IMR-90 (cell line): ENCODE measurements at regions of chr3 and their contacts with region 1.

Region 1: GRCh38 chr3:158109804-158110657 is at the start of gene RSRC1:
- DNase-seq: peak; percentile 89
- ATAC-seq: peak; percentile 78
- H3K4me3 ChIP-seq: peak within 1 kb of the TSS; percentile 85
- H3K27ac ChIP-seq: peak within 1 kb of the TSS; percentile 78
- H3K4me1 ChIP-seq: peaks cover 2% of the 10 kb centered on the region; the same call in 1 of the 2 replicates
- H3K27me3 ChIP-seq: peaks cover 33% of the 10 kb centered on the region
- CTCF ChIP-seq: no peak
- POLR2A ChIP-seq: peak; percentile 50; the same call in 1 of the 2 replicates
- RAD21 ChIP-seq: peak; percentile 13; the same call in 1 of the 2 replicates
- total RNA-seq, gene RSRC1: 41.8 and 71.7 TPM in 2 replicates

Region 2: GRCh38 chr3:158026236-158026635 is 83.8 kb before region 1 on chr3:
- CTCF ChIA-PET with region 1: no interaction called
- POLR2A ChIA-PET with region 1: no interaction called
- dilution Hi-C with region 1: no loop called
- in situ Hi-C with region 1: no loop called
- intact Hi-C with region 1: no loop called
- DNase-seq: no peak
- ATAC-seq: no peak
- H3K4me3 ChIP-seq: no peak overlapping the region
- H3K27ac ChIP-seq: no peak overlapping the region
- H3K4me1 ChIP-seq: no peaks in the 10 kb centered on the region
- H3K27me3 ChIP-seq: no peaks in the 10 kb centered on the region
- CTCF ChIP-seq: no peak
- POLR2A ChIP-seq: no peak
- RAD21 ChIP-seq: no peak

Region 3: GRCh38 chr3:158121295-158121694 is 11.3 kb after region 1 on chr3:
- CTCF ChIA-PET with region 1: no interaction called
- POLR2A ChIA-PET with region 1: interaction called, 10 read pairs
- dilution Hi-C with region 1: no loop called
- in situ Hi-C with region 1: no loop called
- intact Hi-C with region 1: no loop called
- DNase-seq: no peak
- ATAC-seq: no peak
- H3K4me3 ChIP-seq: no peak overlapping the region
- H3K27ac ChIP-seq: no peak overlapping the region
- H3K4me1 ChIP-seq: no peaks in the 10 kb centered on the region
- H3K27me3 ChIP-seq: no peaks in the 10 kb centered on the region
- CTCF ChIP-seq: no peak
- POLR2A ChIP-seq: no peak
- RAD21 ChIP-seq: no peak

Region 4: GRCh38 chr3:158160966-158161365 is 50.9 kb after region 1 on chr3:
- CTCF ChIA-PET with region 1: no interaction called
- POLR2A ChIA-PET with region 1: no interaction called
- dilution Hi-C with region 1: no loop called
- in situ Hi-C with region 1: no loop called
- intact Hi-C with region 1: loop called (anchors 5 kb)
- DNase-seq: peak; percentile 86
- ATAC-seq: peak; percentile 95
- H3K4me3 ChIP-seq: no peak overlapping the region
- H3K27ac ChIP-seq: no peak overlapping the region
- H3K4me1 ChIP-seq: no peaks in the 10 kb centered on the region; the same call in 1 of the 2 replicates
- H3K27me3 ChIP-seq: no peaks in the 10 kb centered on the region
- CTCF ChIP-seq: no peak
- POLR2A ChIP-seq: no peak
- RAD21 ChIP-seq: no peak

Region 5: GRCh38 chr3:158313338-158313927 is 203.4 kb after region 1 on chr3:
- CTCF ChIA-PET with region 1: interaction called, 3 read pairs
- POLR2A ChIA-PET with region 1: no interaction called
- dilution Hi-C with region 1: no loop called
- in situ Hi-C with region 1: no loop called
- intact Hi-C with region 1: loop called (anchors 5 kb)
- DNase-seq: peak; percentile 7
- ATAC-seq: peak; percentile 49; the same call in 1 of the 2 replicates
- H3K4me3 ChIP-seq: no peak overlapping the region
- H3K27ac ChIP-seq: no peak overlapping the region
- H3K4me1 ChIP-seq: no peaks in the 10 kb centered on the region
- H3K27me3 ChIP-seq: no peaks in the 10 kb centered on the region
- CTCF ChIP-seq: peak; percentile 38
- POLR2A ChIP-seq: no peak
- RAD21 ChIP-seq: peak; percentile 55

Region 6: GRCh38 chr3:158532099-158532734 is 422.2 kb after region 1 on chr3:
- CTCF ChIA-PET with region 1: no interaction called
- POLR2A ChIA-PET with region 1: no interaction called
- dilution Hi-C with region 1: no loop called
- in situ Hi-C with region 1: no loop called
- intact Hi-C with region 1: loop called (anchors 5 kb)
- DNase-seq: peak; percentile 70
- ATAC-seq: peak; percentile 54
- H3K4me3 ChIP-seq: no peak overlapping the region
- H3K27ac ChIP-seq: no peak overlapping the region
- H3K4me1 ChIP-seq: no peaks in the 10 kb centered on the region
- H3K27me3 ChIP-seq: no peaks in the 10 kb centered on the region
- CTCF ChIP-seq: peak; percentile 70
- POLR2A ChIP-seq: no peak
- RAD21 ChIP-seq: peak; percentile 80

Region 7: DNA sequence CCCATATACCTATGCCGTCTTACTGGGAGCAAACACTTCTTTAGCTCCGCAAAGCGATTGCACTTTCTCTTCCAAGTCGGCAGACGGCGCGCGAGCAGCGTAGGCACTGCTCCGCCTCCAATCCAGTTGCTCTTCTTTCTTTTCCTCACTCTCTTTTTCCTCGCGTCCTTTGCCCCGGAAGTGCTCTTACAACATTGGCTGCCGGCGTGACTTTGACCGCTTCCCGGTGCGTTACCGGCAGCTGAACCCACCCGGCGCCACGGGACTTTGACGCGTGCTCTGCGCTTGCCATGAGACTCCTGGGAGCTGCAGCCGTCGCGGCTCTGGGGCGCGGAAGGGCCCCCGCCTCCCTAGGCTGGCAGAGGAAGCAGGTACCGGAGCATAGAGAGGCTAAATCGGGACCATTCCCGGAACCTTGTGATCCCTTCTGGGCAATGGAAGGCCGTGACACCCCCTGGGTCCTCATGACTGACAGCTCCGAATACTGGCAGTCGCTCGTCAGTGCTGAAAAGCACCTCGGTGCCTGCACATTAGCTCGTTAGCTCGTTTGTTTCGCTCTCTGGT is 534.4 kb after region 1 on chr3 and contains the start of gene GFM1:
- CTCF ChIA-PET with region 1: no interaction called
- POLR2A ChIA-PET with region 1: no interaction called
- dilution Hi-C with region 1: no loop called
- in situ Hi-C with region 1: no loop called
- intact Hi-C with region 1: loop called (anchors 10 kb)
- DNase-seq: peak; percentile 94
- ATAC-seq: peak; percentile 99
- H3K4me3 ChIP-seq: peak within 1 kb of the TSS; percentile 81
- H3K27ac ChIP-seq: peak within 1 kb of the TSS; percentile 56
- H3K4me1 ChIP-seq: no peaks in the 10 kb centered on the region
- H3K27me3 ChIP-seq: no peaks in the 10 kb centered on the region
- CTCF ChIP-seq: peak; percentile 96
- POLR2A ChIP-seq: peak; percentile 80; the same call in 1 of the 2 replicates
- RAD21 ChIP-seq: peak; percentile 61
- total RNA-seq, gene GFM1: 36.0 and 55.0 TPM in 2 replicates

Region 8: DNA sequence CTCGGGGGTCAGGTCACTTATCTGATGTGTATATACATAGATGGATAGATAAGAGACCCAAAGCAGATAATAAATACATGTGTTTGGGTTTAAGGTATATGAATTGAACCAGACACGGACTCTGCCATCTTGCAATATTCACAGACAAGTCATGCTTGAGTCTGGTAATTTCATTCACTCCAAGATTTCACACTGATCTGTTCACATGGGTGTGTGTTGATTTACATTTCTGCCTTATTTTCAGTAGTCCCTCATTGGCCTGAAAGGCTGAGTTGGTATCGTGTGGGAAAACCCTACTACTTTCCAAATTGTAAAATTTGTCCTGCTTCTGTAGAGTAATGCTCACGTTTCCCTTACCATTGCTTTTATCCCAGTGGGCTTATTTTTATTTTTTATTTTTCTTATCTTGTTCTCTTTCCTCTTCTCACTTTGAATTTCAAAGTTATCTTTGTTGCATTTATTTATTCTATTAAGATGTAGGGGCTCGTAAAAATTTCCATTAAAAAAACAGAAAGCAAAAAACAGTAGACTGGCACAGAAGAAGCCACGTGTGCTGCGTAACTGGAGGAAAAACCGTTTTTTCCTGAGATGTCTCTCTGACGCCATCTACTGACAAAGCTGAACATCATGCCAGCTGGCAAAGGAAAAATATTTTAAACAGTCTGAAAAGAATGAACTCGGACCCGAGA is 681.0 kb after region 1 on chr3:
- CTCF ChIA-PET with region 1: no interaction called
- POLR2A ChIA-PET with region 1: no interaction called
- dilution Hi-C with region 1: no loop called
- in situ Hi-C with region 1: loop called (anchors 25 kb)
- intact Hi-C with region 1: no loop called
- DNase-seq: peak; percentile 86
- ATAC-seq: peak; percentile 36; the same call in 1 of the 2 replicates
- H3K4me3 ChIP-seq: no peak overlapping the region
- H3K27ac ChIP-seq: no peak overlapping the region
- H3K4me1 ChIP-seq: peaks cover 6% of the 10 kb centered on the region
- H3K27me3 ChIP-seq: no peaks in the 10 kb centered on the region
- CTCF ChIP-seq: peak; percentile 95
- POLR2A ChIP-seq: no peak
- RAD21 ChIP-seq: peak; percentile 89